ENCODE measurements at regions of chr1 and their contacts with region 1.

Region 1: GRCh38 chr1:193338194-193338593 is 151.8 kb upstream of the B3GALT2 start:
- DNase-seq: peak; percentile 27
- H3K4me3 Mint-ChIP-seq: no peak overlapping the region
- H3K27ac Mint-ChIP-seq: no peak overlapping the region
- H3K4me1 Mint-ChIP-seq: peaks cover 12% of the 10 kb centered on the region
- H3K27me3 Mint-ChIP-seq: no peaks in the 10 kb centered on the region
- CTCF ChIP-seq: peak; percentile 41

Region 2: DNA sequence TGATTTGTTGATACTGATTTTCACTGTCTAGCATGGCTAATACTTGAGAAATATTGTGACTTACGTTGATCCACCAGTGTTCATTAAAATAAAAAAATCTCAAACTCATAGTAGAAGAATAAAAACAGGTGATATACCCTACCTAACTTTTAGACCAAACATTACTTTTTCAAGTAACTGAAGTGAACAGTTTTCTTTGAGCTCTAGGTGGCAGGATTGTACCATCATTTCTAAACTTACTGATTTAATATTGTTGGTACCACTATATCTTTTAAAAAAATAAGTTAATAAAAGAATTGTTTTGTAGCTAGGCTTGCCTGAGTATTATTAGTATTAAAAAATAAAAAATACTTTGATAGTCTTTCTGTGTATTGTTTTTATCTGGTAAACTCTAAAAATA is 194.9 kb before region 1 on chr1:
- CTCF ChIA-PET with region 1: no interaction called
- POLR2A ChIA-PET with region 1: no interaction called
- intact Hi-C with region 1: loop called (anchors 1 kb)
- DNase-seq: peak; percentile 35
- H3K4me3 Mint-ChIP-seq: no peak overlapping the region
- H3K27ac Mint-ChIP-seq: no peak overlapping the region
- H3K4me1 Mint-ChIP-seq: no peaks in the 10 kb centered on the region
- H3K27me3 Mint-ChIP-seq: no peaks in the 10 kb centered on the region
- CTCF ChIP-seq: peak; percentile 52

Region 3: DNA sequence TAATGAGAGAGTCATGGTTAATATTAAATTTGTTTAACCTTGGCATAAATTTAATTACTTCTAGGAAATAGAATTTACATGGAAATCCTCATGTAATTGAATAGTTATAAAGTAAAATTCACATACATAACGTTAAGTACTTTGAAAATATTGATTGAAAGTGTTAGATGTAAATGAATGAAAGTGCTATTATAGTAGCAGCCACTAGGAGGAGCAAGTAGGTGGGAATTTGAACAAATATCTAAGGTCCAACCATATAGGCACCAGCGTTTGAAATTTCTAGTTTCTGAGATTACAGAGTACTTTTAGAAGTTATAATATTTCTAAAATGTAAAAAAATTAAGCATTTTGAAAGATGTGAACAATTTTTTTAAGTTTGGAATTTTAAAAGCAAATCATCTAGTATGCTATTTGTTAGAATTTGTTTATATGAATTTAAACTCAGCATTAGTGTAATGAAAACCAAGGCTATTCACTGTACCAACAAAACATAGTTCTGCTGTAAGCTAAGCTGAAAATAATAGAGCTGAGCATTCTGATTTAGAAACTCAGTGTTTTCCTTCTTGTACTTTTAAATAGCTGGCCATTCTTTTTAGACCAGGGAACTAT is 155.1 kb before region 1 on chr1:
- CTCF ChIA-PET with region 1: interaction called, 10 read pairs
- POLR2A ChIA-PET with region 1: interaction called, 3 read pairs
- intact Hi-C with region 1: loop called (anchors 1 kb)
- DNase-seq: peak; percentile 77
- H3K4me3 Mint-ChIP-seq: no peak overlapping the region
- H3K27ac Mint-ChIP-seq: no peak overlapping the region
- H3K4me1 Mint-ChIP-seq: peaks cover 26% of the 10 kb centered on the region
- H3K27me3 Mint-ChIP-seq: no peaks in the 10 kb centered on the region
- CTCF ChIP-seq: peak; percentile 83

Region 4: DNA sequence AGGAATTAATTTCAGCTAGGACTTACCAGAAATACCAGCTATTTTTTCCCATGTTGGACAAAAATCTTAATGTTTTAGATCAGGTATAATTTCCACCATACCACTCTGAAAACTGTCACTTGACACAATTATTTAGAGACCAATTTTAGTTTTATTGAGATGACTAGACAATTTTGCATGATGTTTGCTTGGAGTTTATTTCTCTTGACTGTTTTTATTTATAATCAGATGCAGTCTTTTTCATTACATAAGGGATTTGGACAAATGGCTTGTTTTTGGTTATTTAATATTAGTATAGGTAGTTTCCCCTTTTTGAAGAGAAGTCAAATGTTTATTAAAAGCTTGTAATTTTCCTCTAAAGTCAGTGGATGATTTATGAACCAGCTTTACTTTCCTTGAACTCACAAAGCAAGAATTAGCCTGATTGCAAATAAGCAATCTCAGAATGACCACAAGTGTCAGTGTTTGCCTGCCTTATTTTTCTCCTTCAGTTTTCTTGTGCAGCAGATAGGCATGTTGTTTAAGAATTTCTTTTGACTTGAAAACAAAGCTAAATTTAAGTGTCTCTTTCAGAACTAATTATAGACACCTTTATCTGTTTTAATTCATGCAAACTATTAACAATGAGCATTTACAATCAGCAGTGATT is 148.0 kb before region 1 on chr1:
- CTCF ChIA-PET with region 1: interaction called, 15 read pairs
- POLR2A ChIA-PET with region 1: interaction called, 3 read pairs
- intact Hi-C with region 1: no loop called
- DNase-seq: peak; percentile 33
- H3K4me3 Mint-ChIP-seq: no peak overlapping the region
- H3K27ac Mint-ChIP-seq: peak overlapping the region; percentile 13
- H3K4me1 Mint-ChIP-seq: peaks cover 31% of the 10 kb centered on the region
- H3K27me3 Mint-ChIP-seq: no peaks in the 10 kb centered on the region
- CTCF ChIP-seq: peak; percentile 32

Measured in MCF 10A (cell line).